ENCODE measurements at regions of chr14 and their contacts with region 1.

Region 1: GRCh38 chr14:67426983-67427606 is 15.1 kb upstream of the PLEK2 start:
- DNase-seq: peak; percentile 82
- H3K4me3 Mint-ChIP-seq: no peak overlapping the region
- H3K27ac Mint-ChIP-seq: peak overlapping the region; percentile 55
- H3K4me1 Mint-ChIP-seq: peaks cover 10% of the 10 kb centered on the region
- H3K27me3 Mint-ChIP-seq: peaks cover 50% of the 10 kb centered on the region

Region 2: GRCh38 chr14:67437921-67438320 is 10.8 kb after region 1 on chr14:
- CTCF ChIA-PET with region 1: interaction called, 19 read pairs
- DNase-seq: no peak
- H3K4me3 Mint-ChIP-seq: no peak overlapping the region
- H3K27ac Mint-ChIP-seq: no peak overlapping the region
- H3K4me1 Mint-ChIP-seq: no peaks in the 10 kb centered on the region
- H3K27me3 Mint-ChIP-seq: peaks cover 45% of the 10 kb centered on the region

Region 3: DNA sequence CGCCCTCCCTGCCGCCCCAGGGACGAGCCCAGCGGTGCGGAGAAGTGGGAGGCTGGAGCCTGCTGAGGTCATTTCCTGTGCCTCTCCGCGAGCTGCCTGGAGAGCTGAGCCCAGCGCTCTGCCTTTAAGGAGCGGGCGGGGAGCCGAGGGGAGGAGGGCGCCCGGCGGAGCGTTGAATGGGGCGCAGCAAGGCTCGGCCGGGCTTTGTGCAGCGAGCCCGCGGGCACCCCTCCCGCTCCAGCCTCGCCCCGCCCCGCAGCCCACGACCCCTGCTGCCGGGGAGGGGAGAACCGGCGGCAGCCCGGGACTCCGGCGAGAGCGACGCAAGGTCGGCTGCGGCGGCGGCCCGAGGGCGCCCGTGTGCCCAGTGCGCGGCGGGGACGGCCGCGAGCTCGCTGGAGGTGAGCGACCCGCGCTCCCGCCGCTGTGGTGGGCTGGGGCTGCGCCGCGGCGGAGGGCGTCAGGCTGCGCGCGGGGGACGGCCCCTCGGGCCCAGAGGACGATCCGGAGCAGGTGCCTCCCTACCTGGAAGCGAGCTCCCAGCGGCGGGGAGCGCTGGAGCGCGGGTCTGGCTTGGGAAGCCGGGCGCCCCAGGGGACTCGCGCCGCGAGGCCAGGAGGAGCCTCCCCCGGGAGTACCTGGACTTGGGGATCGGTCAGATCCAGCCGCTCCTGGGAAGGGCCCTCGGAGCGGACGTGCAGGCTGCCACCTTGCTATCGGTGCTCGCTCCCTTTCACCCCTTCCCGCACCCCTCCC is 106.1 kb after region 1 on chr14 and contains the start of gene PLEKHH1:
- CTCF ChIA-PET with region 1: interaction called, 52 read pairs
- DNase-seq: peak; percentile 77
- H3K4me3 Mint-ChIP-seq: peak within 1 kb of the TSS; percentile 66
- H3K27ac Mint-ChIP-seq: no peak within 1 kb of the TSS
- H3K4me1 Mint-ChIP-seq: no peaks in the 10 kb centered on the region
- H3K27me3 Mint-ChIP-seq: peaks cover 72% of the 10 kb centered on the region

Region 4: DNA sequence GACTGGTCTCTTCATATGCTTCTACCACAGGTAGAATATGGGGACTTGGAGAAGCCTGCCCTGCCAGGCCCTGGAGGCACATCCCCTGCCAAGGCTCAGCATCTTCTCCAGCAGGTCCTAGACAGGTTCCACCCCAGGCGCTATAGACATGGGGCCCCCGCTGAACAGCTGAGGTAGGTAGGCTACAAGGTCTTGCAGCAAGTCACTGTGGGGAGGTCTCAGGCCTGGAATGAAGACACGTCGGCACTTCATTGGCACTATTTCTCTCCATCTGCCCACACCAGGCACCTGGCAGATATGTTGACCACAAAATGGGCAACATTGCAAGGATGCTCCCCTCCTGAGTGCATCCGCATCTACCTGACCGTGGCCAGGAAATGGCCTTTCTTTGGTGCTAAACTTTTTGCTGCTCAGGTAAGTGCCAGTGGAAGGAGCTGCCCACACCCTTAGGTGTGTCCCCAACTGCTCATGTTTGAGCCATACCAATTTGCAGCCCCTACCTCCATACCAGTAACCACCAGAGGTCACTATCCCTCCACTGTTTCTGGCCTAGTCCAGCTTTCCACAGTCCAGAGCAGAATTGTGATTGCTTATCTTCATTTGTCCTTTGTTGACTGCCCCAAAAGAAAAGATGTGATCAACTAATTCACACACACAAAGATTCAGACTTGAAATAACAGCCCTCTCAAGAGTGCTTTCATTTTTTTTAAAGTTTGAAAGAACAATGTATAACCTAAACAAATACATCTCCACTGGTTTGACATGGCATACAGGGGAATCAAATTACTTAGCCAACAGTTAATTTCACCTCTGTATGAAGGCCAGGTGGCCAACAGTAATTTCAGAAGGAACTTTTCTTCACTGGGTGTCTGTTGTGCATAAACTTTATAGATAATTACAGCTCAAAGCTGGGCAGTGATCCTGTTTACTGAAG is 156.9 kb after region 1 on chr14:
- CTCF ChIA-PET with region 1: interaction called, 14 read pairs
- DNase-seq: peak; percentile 55
- H3K4me3 Mint-ChIP-seq: no peak overlapping the region
- H3K27ac Mint-ChIP-seq: no peak overlapping the region
- H3K4me1 Mint-ChIP-seq: peaks cover 12% of the 10 kb centered on the region
- H3K27me3 Mint-ChIP-seq: no peaks in the 10 kb centered on the region

Region 5: GRCh38 chr14:67704484-67705089 is 277.5 kb after region 1 on chr14:
- CTCF ChIA-PET with region 1: interaction called, 48 read pairs
- DNase-seq: peak; percentile 50
- H3K4me3 Mint-ChIP-seq: no peak overlapping the region
- H3K27ac Mint-ChIP-seq: no peak overlapping the region
- H3K4me1 Mint-ChIP-seq: no peaks in the 10 kb centered on the region
- H3K27me3 Mint-ChIP-seq: peaks cover 4% of the 10 kb centered on the region

Measured in activated naive CD4-positive, alpha-beta T cell treated with anti-CD3 and anti-CD28 coated beads, Interleukin-2, amount 10 ng/mL, durations not matched to agents 7 days and 5 days (primary cell).